ENCODE measurements at regions of chr5 and their contacts with region 1.

Region 1: GRCh38 chr5:136132557-136133221 is at the start of gene SMAD5:
- DNase-seq: peak; percentile 97
- H3K4me3 Mint-ChIP-seq: peak within 1 kb of the TSS; percentile 89
- H3K27ac Mint-ChIP-seq: peak within 1 kb of the TSS; percentile 97
- H3K4me1 Mint-ChIP-seq: peaks cover 22% of the 10 kb centered on the region
- H3K27me3 Mint-ChIP-seq: no peaks in the 10 kb centered on the region
- CTCF ChIP-seq: no peak
- total RNA-seq, gene SMAD5: 97.4 and 106 TPM in 2 replicates

Region 2: DNA sequence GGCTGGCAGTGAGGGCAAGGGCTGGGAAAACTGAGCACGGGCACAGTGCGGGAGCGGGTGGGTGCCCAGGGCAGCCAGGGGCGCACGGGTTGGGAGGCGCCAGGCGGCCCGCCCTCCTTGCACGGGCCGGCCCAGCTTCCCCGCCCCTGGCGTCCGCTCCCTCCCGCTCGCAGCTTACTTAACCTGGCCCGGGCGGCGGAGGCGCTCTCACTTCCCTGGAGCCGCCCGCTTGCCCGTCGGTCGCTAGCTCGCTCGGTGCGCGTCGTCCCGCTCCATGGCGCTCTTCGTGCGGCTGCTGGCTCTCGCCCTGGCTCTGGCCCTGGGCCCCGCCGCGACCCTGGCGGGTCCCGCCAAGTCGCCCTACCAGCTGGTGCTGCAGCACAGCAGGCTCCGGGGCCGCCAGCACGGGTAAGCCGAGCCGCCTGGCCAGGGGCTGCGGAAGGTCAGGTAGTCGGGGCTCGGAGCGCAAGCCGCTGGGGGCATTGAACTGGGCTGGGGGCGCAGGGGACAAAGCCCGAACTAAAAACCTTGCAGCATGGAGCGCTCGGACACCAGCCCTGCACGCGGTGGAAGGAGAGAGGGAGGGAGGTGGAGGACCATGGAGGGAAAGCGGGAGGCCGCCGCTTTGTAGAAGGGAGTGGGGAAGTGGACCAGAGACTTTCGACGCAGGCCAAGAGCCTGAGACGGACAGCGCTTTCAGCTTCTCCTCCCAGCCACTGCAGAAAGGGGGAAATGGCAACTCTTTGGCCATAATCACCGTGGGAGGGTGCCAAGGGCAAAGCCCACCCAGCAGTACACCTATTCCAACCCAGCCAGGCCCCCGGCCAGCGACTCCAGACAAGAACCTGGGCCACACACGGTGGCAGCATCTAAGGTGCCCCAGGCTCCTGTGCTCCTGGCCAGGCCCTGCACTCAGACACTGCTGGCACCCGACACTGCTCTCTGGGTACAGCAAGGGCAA is 103.6 kb before region 1 on chr5 and contains the start of gene TGFBI:
- CTCF ChIA-PET with region 1: interaction called, 3 read pairs
- POLR2A ChIA-PET with region 1: interaction called, 70 read pairs
- intact Hi-C with region 1: no loop called
- DNase-seq: peak; percentile 87
- H3K4me3 Mint-ChIP-seq: peak within 1 kb of the TSS; percentile 80
- H3K27ac Mint-ChIP-seq: peak within 1 kb of the TSS; percentile 76
- H3K4me1 Mint-ChIP-seq: peaks cover 57% of the 10 kb centered on the region
- H3K27me3 Mint-ChIP-seq: no peaks in the 10 kb centered on the region
- CTCF ChIP-seq: no peak
- total RNA-seq, gene TGFBI: 623 and 892 TPM in 2 replicates

Region 3: GRCh38 chr5:136087961-136088871 is 44.5 kb before region 1 on chr5:
- CTCF ChIA-PET with region 1: interaction called, 5 read pairs
- POLR2A ChIA-PET with region 1: interaction called, 21 read pairs
- intact Hi-C with region 1: no loop called
- DNase-seq: peak; percentile 84
- H3K4me3 Mint-ChIP-seq: no peak overlapping the region
- H3K27ac Mint-ChIP-seq: peak overlapping the region; percentile 8
- H3K4me1 Mint-ChIP-seq: peaks cover 10% of the 10 kb centered on the region
- H3K27me3 Mint-ChIP-seq: no peaks in the 10 kb centered on the region
- CTCF ChIP-seq: no peak

Region 4: GRCh38 chr5:136108180-136108611 is 24.5 kb before region 1 on chr5:
- CTCF ChIA-PET with region 1: interaction called, 17 read pairs
- POLR2A ChIA-PET with region 1: interaction called, 42 read pairs
- intact Hi-C with region 1: no loop called
- DNase-seq: peak; percentile 48
- H3K4me3 Mint-ChIP-seq: no peak overlapping the region
- H3K27ac Mint-ChIP-seq: peak overlapping the region; percentile 80
- H3K4me1 Mint-ChIP-seq: peaks cover 16% of the 10 kb centered on the region
- H3K27me3 Mint-ChIP-seq: no peaks in the 10 kb centered on the region
- CTCF ChIP-seq: no peak